MCF 10A (cell line): ENCODE measurements at regions of chr22 and their contacts with region 1.

Region 1: GRCh38 chr22:19909350-19910179 is 32.0 kb upstream of the COMT start:
- DNase-seq: peak; percentile 75
- H3K4me3 Mint-ChIP-seq: no peak overlapping the region
- H3K27ac Mint-ChIP-seq: peak overlapping the region; percentile 5
- H3K4me1 Mint-ChIP-seq: peaks cover 6% of the 10 kb centered on the region
- H3K27me3 Mint-ChIP-seq: no peaks in the 10 kb centered on the region
- CTCF ChIP-seq: peak; percentile 73

Region 2: DNA sequence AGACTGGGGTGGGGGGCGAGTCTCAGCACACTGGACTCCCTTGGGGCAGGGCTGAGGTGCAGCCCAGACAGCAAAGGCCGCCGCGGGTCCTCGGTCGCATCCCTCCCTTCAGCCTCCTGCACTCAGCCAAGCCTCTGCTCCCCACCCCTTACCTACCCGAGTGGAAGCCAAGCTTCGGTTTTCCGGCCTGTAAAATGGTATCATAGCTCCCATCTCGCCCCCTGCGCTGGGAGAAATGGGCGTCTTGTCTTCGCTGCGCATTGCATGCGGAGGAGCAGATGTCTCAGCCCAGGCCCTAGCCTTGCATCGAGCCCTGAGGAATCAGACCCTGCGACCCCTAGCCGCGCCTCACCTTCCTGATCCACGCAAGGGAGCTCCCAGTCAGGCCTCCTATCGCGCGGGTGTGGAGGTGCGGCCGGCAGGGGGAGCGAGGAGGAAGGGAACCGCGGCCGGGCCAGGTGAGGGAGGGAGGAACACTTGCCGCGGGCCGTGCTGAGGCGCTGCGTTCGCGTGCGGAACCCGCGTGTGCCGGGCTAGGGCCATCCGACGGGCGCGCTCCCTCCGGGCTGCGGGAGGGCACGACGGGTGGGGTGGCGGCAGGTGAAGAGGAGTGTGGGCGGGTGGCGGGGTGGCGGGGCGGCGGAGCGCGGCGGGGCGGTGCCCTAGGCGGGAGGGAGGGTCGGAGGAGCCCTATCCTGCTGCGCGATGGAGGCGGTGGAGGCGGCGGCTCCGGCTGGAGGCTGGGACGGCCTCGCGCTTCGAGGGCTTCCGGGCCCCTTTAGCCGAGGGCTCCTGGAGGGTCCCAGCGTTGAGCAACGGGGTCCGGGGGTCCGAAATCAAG is 153.1 kb before region 1 on chr22:
- CTCF ChIA-PET with region 1: interaction called, 17 read pairs
- POLR2A ChIA-PET with region 1: interaction called, 3 read pairs
- intact Hi-C with region 1: loop called (anchors 1 kb)
- DNase-seq: peak; percentile 75
- H3K4me3 Mint-ChIP-seq: peak overlapping the region; percentile 50
- H3K27ac Mint-ChIP-seq: no peak overlapping the region
- H3K4me1 Mint-ChIP-seq: peaks cover 9% of the 10 kb centered on the region
- H3K27me3 Mint-ChIP-seq: peaks cover 27% of the 10 kb centered on the region
- CTCF ChIP-seq: peak; percentile 61